HepG2 (cell line): ENCODE measurements at regions of chr20 and their contacts with region 1.

Region 1: GRCh38 chr20:32207626-32208498 is at the starts of genes PLAGL2 and POFUT1:
- DNase-seq: peak; percentile 82
- ATAC-seq: peak; percentile 96
- H3K4me3 ChIP-seq: peak within 1 kb of the TSS; percentile 91 to 99 (median 94)
- H3K27ac ChIP-seq: peak within 1 kb of the TSS; percentile 76
- H3K4me1 ChIP-seq: peaks cover 74% of the 10 kb centered on the region
- H3K27me3 ChIP-seq: peaks cover 0 to 7% of the 10 kb centered on the region in 2 experiments; a peak in 1 of 5 replicates
- CTCF ChIP-seq: peak; percentile 74
- EP300 ChIP-seq: peak; percentile 40 to 66; a peak in 1 of 4 replicates
- POLR2A ChIP-seq: peak; percentile 92 to 96
- RAD21 ChIP-seq: peak; percentile 93
- total RNA-seq, gene PLAGL2: 15.3 and 26.5 TPM in 2 replicates
- total RNA-seq, gene POFUT1: 30.2 and 58.3 TPM in 2 replicates

Region 2: DNA sequence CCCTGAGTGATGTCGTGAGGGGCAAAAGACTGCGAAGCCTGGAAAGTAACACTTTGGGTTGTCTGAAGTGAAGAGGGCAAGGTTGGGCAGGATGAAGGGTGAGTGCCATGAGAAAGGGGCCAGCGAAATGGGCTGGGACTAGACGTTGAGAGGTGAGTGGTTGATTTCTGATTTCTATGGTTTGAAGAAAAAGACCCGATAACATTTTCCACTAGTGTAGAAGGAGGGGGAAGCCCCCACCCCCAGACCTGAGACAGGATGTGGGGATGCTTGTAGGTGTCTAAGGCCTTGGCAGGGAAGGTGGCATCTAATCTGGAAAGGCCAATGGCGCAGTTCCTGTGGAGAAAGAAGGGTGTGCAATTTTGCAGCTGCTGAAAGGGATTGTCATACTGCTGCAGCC is 44.3 kb after region 1 on chr20:
- CTCF ChIA-PET with region 1: no interaction called
- POLR2A ChIA-PET with region 1: no interaction called
- in situ Hi-C with region 1: no loop called
- intact Hi-C with region 1: loop called (anchors 5 kb)
- DNase-seq: no peak
- ATAC-seq: no peak
- H3K4me3 ChIP-seq: no peak overlapping the region
- H3K27ac ChIP-seq: no peak overlapping the region
- H3K4me1 ChIP-seq: peaks cover 46% of the 10 kb centered on the region
- H3K27me3 ChIP-seq: no peaks in the 10 kb centered on the region
- CTCF ChIP-seq: no peak
- EP300 ChIP-seq: no peak
- POLR2A ChIP-seq: no peak
- RAD21 ChIP-seq: no peak